Naive thymus-derived CD4-positive, alpha-beta T cell (primary cell): ENCODE measurements at regions of chr4 and their contacts with region 1.

Region 1: DNA sequence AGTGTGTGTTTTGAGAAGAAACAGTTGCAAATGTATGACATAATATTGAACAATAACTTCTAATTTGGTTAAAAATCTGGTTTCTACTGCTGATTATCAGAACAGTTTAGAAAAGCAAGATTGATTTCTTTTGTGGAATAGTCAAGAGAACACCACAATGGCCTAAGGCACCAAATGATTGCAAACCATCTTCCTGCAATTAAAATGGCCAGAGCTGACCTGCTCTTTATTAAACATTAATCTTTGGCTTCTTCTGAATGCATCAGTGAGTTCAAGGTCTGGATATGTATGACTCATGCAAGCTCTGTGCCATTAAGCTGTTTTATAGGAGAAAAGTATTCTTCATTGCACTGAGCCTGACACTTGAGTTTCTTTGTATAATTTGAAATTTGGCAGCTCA is 107.8 kb upstream of the PDHA2 start:
- DNase-seq: no peak
- ATAC-seq: no peak
- H3K4me3 ChIP-seq: no peak overlapping the region
- H3K4me3 Mint-ChIP-seq: no peak overlapping the region
- H3K27ac ChIP-seq: no peak overlapping the region
- H3K27ac Mint-ChIP-seq: no peak overlapping the region
- H3K4me1 ChIP-seq: no peaks in the 10 kb centered on the region
- H3K4me1 Mint-ChIP-seq: no peaks in the 10 kb centered on the region
- H3K27me3 ChIP-seq: no peaks in the 10 kb centered on the region
- H3K27me3 Mint-ChIP-seq: peaks cover 0 to 4% (median 0%) of the 10 kb centered on the region in 5 donors

Region 2: GRCh38 chr4:95651891-95652290 is 80.2 kb before region 1 on chr4:
- CTCF ChIA-PET with region 1: no interaction called
- POLR2A ChIA-PET with region 1: no interaction called
- intact Hi-C with region 1: loop called in 1 of 2 experiments (anchors 10 kb)
- DNase-seq: no peak
- ATAC-seq: no peak
- H3K4me3 ChIP-seq: no peak overlapping the region
- H3K4me3 Mint-ChIP-seq: no peak overlapping the region
- H3K27ac ChIP-seq: no peak overlapping the region
- H3K27ac Mint-ChIP-seq: no peak overlapping the region
- H3K4me1 ChIP-seq: no peaks in the 10 kb centered on the region
- H3K4me1 Mint-ChIP-seq: no peaks in the 10 kb centered on the region
- H3K27me3 ChIP-seq: no peaks in the 10 kb centered on the region
- H3K27me3 Mint-ChIP-seq: peaks cover 0 to 3% (median 0%) of the 10 kb centered on the region in 5 donors